GM18951 (cell line): ENCODE measurements at regions of chr18 and their contacts with region 1.

Region 1: GRCh38 chr18:4106407-4107033 is 348.6 kb downstream of the DLGAP1 start:
- POLR2A ChIP-seq: no peak

Region 2: GRCh38 chr18:5066380-5066977 is 960.0 kb after region 1 on chr18:
- in situ Hi-C with region 1: loop called (anchors 10 kb)
- POLR2A ChIP-seq: no peak